ENCODE measurements at regions of chr6 and their contacts with region 1.

Region 1: DNA sequence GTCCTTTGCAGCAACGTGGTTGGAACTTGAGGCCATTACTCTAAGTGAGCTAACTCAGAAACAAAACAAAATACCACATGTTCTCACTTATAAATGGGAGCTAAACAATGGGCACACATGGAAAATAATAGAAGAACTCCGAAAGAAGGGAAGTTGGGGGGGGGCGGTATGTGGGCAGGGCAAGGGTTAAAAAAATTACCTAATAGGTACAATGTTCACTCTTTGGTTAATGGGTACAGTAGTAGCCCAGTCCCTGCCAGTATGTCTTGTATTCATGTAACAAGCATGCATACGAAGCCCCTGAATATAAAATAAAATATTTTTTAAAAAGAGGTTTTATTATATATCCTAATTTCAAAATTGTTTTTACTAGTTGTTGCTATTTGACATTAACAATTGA is 15.3 kb upstream of the FHL5 start:
- DNase-seq: no peak
- H3K4me3 Mint-ChIP-seq: no peak overlapping the region
- H3K27ac Mint-ChIP-seq: no peak overlapping the region
- H3K4me1 Mint-ChIP-seq: no peaks in the 10 kb centered on the region
- H3K27me3 Mint-ChIP-seq: no peaks in the 10 kb centered on the region

Region 2: GRCh38 chr6:96116663-96117062 is 431.0 kb before region 1 on chr6:
- CTCF ChIA-PET with region 1: no interaction called
- POLR2A ChIA-PET with region 1: no interaction called
- DNase-seq: peak; percentile 16
- H3K4me3 Mint-ChIP-seq: no peak overlapping the region
- H3K27ac Mint-ChIP-seq: no peak overlapping the region
- H3K4me1 Mint-ChIP-seq: no peaks in the 10 kb centered on the region
- H3K27me3 Mint-ChIP-seq: no peaks in the 10 kb centered on the region

Region 3: GRCh38 chr6:96528193-96528592 is 19.5 kb before region 1 on chr6:
- CTCF ChIA-PET with region 1: interaction called, 3 read pairs
- POLR2A ChIA-PET with region 1: interaction called, 11 read pairs
- DNase-seq: no peak
- H3K4me3 Mint-ChIP-seq: no peak overlapping the region
- H3K27ac Mint-ChIP-seq: no peak overlapping the region
- H3K4me1 Mint-ChIP-seq: peaks cover 19% of the 10 kb centered on the region
- H3K27me3 Mint-ChIP-seq: no peaks in the 10 kb centered on the region

Measured in activated CD4-positive, alpha-beta T cell treated with anti-CD3 and anti-CD28 coated beads, Interleukin-2, amount 10 ng/mL, durations not matched to agents 7 days and 5 days (primary cell).